ENCODE measurements at regions of chr10 and their contacts with region 1.

Region 1: DNA sequence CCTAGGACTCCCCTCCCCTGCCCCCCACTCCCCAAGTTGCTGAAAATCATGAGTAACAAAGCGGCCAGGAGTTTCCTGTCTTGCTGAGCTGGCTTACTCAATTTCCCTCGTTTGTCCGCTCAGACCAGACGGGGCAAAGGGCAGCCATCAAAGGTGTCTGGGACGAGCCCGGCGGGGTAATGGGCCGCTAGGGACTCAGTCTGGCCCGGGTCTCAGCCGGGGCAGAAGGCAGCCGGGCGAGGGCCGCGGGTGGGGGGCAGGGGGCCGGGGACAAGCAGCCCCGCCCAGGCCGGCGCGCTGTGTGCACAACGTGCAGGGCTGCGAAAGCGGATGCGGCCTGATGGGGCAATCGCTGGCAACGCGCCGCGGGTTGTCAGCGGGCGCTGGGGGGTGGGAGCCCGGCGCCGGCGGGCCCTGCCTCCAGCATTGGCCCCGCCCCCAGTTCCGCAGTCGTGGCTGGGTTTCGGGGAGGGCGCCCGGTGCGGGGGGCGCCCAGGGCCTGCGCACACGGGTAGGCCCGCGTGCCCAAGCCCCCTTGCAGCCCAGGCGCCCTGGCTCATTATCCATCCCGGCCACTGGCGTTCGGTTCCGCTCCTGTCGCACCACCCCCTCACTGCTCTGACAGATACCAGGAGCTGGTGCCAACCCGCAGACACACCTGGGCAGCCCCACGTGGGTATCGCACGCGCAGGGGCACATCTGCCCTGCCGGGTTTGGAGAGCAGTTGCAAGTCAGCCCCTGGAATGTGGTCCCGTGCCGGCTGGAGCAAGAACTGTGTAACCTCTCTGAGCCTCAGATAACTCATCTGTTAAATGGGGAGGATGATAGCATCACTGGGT is 35.1 kb downstream of the DNAJB12 start:
- DNase-seq: peak; percentile 92 to 98 (median 95)
- ATAC-seq: peak; percentile 33 to 86 (median 74)
- H3K4me3 ChIP-seq: peak overlapping the region in 11 of 12 donors; percentile 0 to 60 (median 51)
- H3K27ac ChIP-seq: peak overlapping the region; percentile 51 to 97 (median 86)
- H3K4me1 ChIP-seq: peaks cover 18 to 96% (median 62%) of the 10 kb centered on the region in 12 donors
- H3K27me3 ChIP-seq: no peaks in the 10 kb centered on the region
- CTCF ChIP-seq: peak in 1 of 12 donors; percentile 16
- POLR2A ChIP-seq: peak in 1 of 2 donors; percentile 54

Region 2: DNA sequence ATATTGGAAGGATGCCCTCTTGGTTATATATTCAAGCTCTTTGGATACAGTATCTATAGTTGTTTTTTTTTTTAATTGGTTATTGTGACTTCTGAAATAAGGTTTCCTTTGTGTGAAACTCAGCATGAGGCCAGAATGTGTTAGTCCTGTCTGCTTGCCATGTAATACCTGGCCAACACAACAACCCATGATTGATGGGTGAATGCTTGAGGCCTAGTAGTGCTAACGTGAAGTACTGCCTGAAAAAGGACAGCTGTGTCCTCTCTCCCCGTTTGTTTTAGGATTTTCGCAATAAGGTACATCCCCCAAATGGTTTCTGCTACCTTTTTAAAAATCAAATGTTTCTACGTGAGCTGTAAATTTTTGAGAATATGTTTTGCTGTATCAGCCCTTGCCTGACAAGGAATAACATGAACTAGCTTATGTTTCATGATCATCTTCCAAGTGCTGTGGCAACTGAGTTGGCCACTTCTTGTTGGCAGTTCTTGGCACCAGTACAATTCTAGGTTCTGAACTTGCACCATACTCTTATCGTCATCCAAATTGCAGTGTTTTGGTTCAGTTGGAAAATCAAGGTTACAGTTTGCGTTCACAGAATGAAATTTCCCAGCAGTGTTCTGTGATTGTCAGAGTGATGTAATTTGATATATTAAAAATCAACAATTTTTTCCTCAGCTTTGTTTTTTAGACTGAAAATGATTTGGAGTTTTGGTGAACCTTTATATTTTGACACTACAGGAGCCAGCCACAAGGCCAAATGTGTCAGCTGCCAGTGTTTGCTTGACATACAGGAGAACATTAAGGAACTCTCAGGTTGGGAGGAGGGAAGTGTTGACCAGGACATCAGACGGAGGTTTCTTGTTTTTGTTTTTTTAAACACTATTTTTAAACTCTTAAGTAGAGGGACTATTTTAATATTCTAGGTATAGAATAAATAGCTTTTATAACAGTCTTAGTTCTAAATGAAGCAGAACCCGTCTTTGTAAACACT is 90.1 kb before region 1 on chr10:
- intact Hi-C with region 1: loop called in 1 of 10 experiments (anchors 10 kb)
- DNase-seq: no peak
- ATAC-seq: peak in 3 of 4 donors; percentile 28 to 57 (median 56)
- H3K4me3 ChIP-seq: no peak overlapping the region
- H3K27ac ChIP-seq: peak overlapping the region in 8 of 12 donors; percentile 12 to 77 (median 52)
- H3K4me1 ChIP-seq: peaks cover 0 to 42% (median 11%) of the 10 kb centered on the region in 12 donors
- H3K27me3 ChIP-seq: no peaks in the 10 kb centered on the region
- CTCF ChIP-seq: no peak
- POLR2A ChIP-seq: no peak

Region 3: GRCh38 chr10:72248468-72249151 is 71.0 kb before region 1 on chr10:
- intact Hi-C with region 1: loop called in 1 of 10 experiments (anchors 2 kb)
- DNase-seq: peak; percentile 88 to 91 (median 88)
- ATAC-seq: peak; percentile 87 to 93 (median 90)
- H3K4me3 ChIP-seq: peak overlapping the region in 9 of 12 donors; percentile 6 to 39 (median 16)
- H3K27ac ChIP-seq: peak overlapping the region; percentile 81 to 96 (median 92)
- H3K4me1 ChIP-seq: peaks cover 28 to 100% (median 87%) of the 10 kb centered on the region in 12 donors
- H3K27me3 ChIP-seq: no peaks in the 10 kb centered on the region
- CTCF ChIP-seq: no peak
- POLR2A ChIP-seq: peak in 1 of 2 donors; percentile 23

Region 4: GRCh38 chr10:72297968-72298773 is 21.5 kb before region 1 on chr10:
- intact Hi-C with region 1: loop called in 1 of 10 experiments (anchors 2 kb)
- DNase-seq: peak; percentile 98 to 100 (median 99)
- ATAC-seq: peak; percentile 94 to 98 (median 96)
- H3K4me3 ChIP-seq: peak overlapping the region; percentile 42 to 92 (median 70)
- H3K27ac ChIP-seq: peak overlapping the region; percentile 79 to 99 (median 93)
- H3K4me1 ChIP-seq: peaks cover 0 to 37% (median 11%) of the 10 kb centered on the region in 12 donors
- H3K27me3 ChIP-seq: no peaks in the 10 kb centered on the region
- CTCF ChIP-seq: no peak
- POLR2A ChIP-seq: peak in 1 of 2 donors; percentile 88

Region 5: DNA sequence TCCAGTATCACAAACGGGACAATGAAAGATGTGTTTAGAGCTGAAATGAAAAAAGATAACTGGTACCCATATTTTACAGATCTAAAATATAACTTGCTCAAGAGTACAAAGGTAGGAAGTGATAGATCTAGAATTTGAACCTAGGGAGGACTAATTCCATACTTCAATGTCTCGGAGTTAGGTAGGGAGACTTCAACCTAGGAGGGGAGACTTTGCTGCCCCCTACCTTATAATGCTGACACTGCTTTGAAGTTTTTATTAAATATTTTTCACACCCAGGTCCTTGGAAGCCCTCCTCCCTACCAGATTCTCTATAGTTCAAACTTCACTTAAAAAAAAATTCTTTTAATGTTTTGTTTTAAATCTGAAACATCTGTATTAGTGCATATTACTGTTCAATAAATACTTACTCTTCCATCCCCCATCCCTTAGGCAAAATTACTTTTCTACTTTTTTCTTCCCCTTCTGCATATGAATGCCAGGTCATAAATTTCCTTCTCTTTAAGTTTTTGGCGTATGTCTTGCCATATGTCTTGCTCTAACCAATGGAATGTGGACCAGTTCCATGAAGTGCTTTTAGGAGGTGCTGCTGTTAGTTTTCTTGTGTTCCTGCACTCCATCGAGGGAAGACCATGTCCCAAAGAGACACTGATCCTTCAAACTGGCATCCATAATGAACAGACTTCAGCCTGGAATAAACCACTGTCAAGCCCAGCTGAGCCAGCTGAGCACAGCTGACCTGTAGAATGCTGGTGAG is 248.4 kb after region 1 on chr10:
- intact Hi-C with region 1: no loop called
- DNase-seq: no peak
- ATAC-seq: peak in 2 of 4 donors; percentile 33 to 50
- H3K4me3 ChIP-seq: no peak overlapping the region
- H3K27ac ChIP-seq: peak overlapping the region in 2 of 12 donors; percentile 22 to 24
- H3K4me1 ChIP-seq: peaks cover 0 to 17% (median 0%) of the 10 kb centered on the region in 12 donors
- H3K27me3 ChIP-seq: no peaks in the 10 kb centered on the region
- CTCF ChIP-seq: peak in 9 of 12 donors; percentile 8 to 46 (median 31)
- POLR2A ChIP-seq: no peak

Measured in heart left ventricle (tissue), 16 donors.